ENCODE measurements at regions of chr1 and their contacts with region 1.

Region 1: GRCh38 chr1:40668769-40669525 is 3.5 kb upstream of the RIMS3 start:
- DNase-seq: peak; percentile 61
- ATAC-seq: peak; percentile 61
- H3K4me3 ChIP-seq: peak overlapping the region; percentile 24 to 25; a peak in 3 of 4 replicates
- H3K27ac ChIP-seq: no peak overlapping the region
- H3K4me1 ChIP-seq: peaks cover 6 to 23% of the 10 kb centered on the region in 2 experiments
- H3K27me3 ChIP-seq: no peaks in the 10 kb centered on the region
- CTCF ChIP-seq: peak; percentile 84 to 94 (median 87)
- POLR2A ChIP-seq: no peak
- RAD21 ChIP-seq: peak; percentile 83

Region 2: GRCh38 chr1:40531381-40532061 is 137.4 kb before region 1 on chr1 and contains the start of gene ZNF684:
- CTCF ChIA-PET with region 1: interaction called, 4 read pairs
- POLR2A ChIA-PET with region 1: no interaction called
- RAD21 ChIA-PET with region 1: no interaction called
- intact Hi-C with region 1: loop called (anchors 5 kb)
- DNase-seq: peak; percentile 93
- ATAC-seq: peak; percentile 98
- H3K4me3 ChIP-seq: peak within 1 kb of the TSS; percentile 61 to 72
- H3K27ac ChIP-seq: peak within 1 kb of the TSS; percentile 68
- H3K4me1 ChIP-seq: peaks cover 7 to 11% of the 10 kb centered on the region in 2 experiments; a peak in 3 of 4 replicates
- H3K27me3 ChIP-seq: no peaks in the 10 kb centered on the region
- CTCF ChIP-seq: no peak
- POLR2A ChIP-seq: peak; percentile 82
- RAD21 ChIP-seq: no peak
- total RNA-seq, gene ZNF684: 5.3 TPM

Region 3: GRCh38 chr1:40612345-40612831 is 56.6 kb before region 1 on chr1:
- CTCF ChIA-PET with region 1: interaction called, 3 read pairs
- POLR2A ChIA-PET with region 1: no interaction called
- RAD21 ChIA-PET with region 1: no interaction called
- intact Hi-C with region 1: loop called (anchors 2 kb)
- DNase-seq: peak; percentile 48
- ATAC-seq: peak; percentile 99
- H3K4me3 ChIP-seq: no peak overlapping the region
- H3K27ac ChIP-seq: no peak overlapping the region
- H3K4me1 ChIP-seq: peaks cover 0 to 4% of the 10 kb centered on the region in 2 experiments; a peak in 1 of 4 replicates
- H3K27me3 ChIP-seq: no peaks in the 10 kb centered on the region
- CTCF ChIP-seq: peak; percentile 90 to 93 (median 92)
- POLR2A ChIP-seq: no peak
- RAD21 ChIP-seq: peak; percentile 94

Region 4: DNA sequence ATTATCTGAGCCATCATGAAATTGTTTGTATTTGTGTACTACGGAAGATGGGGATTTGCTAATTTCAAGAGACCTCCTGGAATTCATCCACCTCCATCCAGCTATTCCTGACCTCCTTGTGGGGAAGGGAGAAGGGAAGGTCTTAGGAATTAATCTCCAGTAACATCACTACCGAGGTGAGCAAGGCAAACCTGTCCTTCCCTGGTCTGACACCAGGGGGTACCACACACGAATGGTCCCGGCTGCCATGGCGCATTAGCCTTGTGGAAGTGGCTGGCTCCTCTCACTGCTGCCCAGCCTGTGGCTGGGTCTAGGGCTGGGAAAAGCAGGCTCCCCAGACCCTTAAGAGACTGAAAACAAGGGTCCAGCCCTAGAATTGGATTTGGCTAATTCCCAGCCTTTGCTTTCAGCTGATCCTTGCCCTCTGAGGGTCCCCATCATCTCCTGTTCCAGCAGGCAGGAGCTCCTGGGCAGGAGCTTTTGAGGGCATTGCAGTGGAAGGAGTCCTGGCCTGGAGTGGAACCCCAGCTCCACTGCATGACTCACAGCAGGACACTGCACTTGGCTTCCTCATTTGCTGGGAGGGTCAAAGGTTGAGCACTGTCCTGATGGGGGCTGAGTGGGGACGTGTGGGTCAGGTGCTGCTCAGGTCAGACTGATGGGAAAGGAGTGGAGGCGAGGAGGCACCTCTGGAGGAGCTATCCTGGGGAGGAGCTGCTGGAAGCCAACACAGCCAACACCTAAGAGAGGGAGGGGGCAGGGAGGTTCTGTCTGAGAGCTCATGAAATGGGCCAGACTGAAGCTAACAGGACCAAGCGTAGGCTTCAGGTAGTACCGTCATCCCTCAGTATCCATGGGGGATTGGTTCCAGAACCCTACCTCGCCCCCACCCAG is 38.2 kb before region 1 on chr1:
- CTCF ChIA-PET with region 1: interaction called, 16 read pairs
- POLR2A ChIA-PET with region 1: no interaction called
- RAD21 ChIA-PET with region 1: no interaction called
- intact Hi-C with region 1: loop called (anchors 1 kb)
- DNase-seq: peak; percentile 31
- ATAC-seq: peak; percentile 93
- H3K4me3 ChIP-seq: no peak overlapping the region
- H3K27ac ChIP-seq: no peak overlapping the region
- H3K4me1 ChIP-seq: peaks cover 0 to 5% of the 10 kb centered on the region in 2 experiments; a peak in 1 of 4 replicates
- H3K27me3 ChIP-seq: no peaks in the 10 kb centered on the region
- CTCF ChIP-seq: peak; percentile 61 to 73 (median 64)
- POLR2A ChIP-seq: no peak
- RAD21 ChIP-seq: peak; percentile 66

Region 5: DNA sequence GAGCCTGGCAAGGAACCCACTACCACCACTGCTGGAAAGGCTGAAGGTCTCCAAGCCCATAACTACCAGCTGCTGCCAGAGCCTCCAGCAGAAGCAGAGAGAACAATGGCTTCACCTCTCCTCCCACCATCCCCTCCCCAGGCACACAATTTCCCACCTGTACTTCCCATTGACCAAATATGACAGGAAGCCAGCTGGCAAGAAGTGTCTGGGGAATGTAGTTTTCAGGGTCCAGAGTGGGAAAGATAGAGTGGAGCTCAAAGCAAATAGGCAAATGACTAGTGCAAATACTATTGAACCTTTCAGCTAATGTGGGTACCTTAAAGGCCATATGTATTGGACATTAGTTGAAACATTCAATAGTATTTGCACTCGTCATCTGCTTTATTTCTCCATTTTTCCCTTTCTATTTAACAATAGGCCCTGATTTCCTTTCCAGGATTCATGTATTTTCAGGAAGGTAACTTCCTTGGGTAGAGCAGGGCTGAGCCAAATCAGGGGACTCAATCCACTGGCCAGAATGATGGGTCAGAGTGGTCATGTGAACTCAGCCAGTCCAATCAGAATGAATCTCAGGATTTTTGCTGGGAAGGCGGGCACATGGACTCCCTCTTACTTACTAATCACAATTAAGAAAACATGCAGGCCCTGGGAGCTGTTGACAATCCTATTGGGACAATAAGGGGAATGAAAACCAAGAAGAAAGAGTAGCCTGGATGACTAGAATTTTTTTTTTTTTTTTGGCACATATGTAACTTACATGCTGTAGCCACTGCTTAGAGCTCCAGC is 10.4 kb after region 1 on chr1:
- CTCF ChIA-PET with region 1: interaction called, 12 read pairs
- POLR2A ChIA-PET with region 1: interaction called, 3 read pairs
- RAD21 ChIA-PET with region 1: no interaction called
- intact Hi-C with region 1: no loop called
- DNase-seq: no peak
- ATAC-seq: peak; percentile 32; the same call in 1 of the 2 replicates
- H3K4me3 ChIP-seq: no peak overlapping the region
- H3K27ac ChIP-seq: no peak overlapping the region
- H3K4me1 ChIP-seq: no peaks in the 10 kb centered on the region
- H3K27me3 ChIP-seq: no peaks in the 10 kb centered on the region
- CTCF ChIP-seq: no peak
- POLR2A ChIP-seq: no peak
- RAD21 ChIP-seq: no peak

Region 6: GRCh38 chr1:40691538-40692428 is 22.8 kb after region 1 on chr1 and contains the start of gene NFYC:
- CTCF ChIA-PET with region 1: interaction called, 7 read pairs
- POLR2A ChIA-PET with region 1: interaction called, 12 read pairs
- RAD21 ChIA-PET with region 1: interaction called in 1 of 2 experiments, 4 read pairs
- intact Hi-C with region 1: no loop called
- DNase-seq: peak; percentile 98
- ATAC-seq: peak; percentile 92
- H3K4me3 ChIP-seq: peak within 1 kb of the TSS; percentile 68 to 76
- H3K27ac ChIP-seq: peak within 1 kb of the TSS; percentile 98
- H3K4me1 ChIP-seq: peaks cover 4 to 18% of the 10 kb centered on the region in 2 experiments; a peak in 3 of 4 replicates
- H3K27me3 ChIP-seq: no peaks in the 10 kb centered on the region
- CTCF ChIP-seq: 0 out of 6 replicates have a peak, but pooled peaks of 1 of the 3 experiments have one; percentile 4
- POLR2A ChIP-seq: peak; percentile 73
- RAD21 ChIP-seq: no peak
- total RNA-seq, gene NFYC: 63.3 TPM

Measured in HCT116 (cell line).